ENCODE measurements at regions of chr15 and their contacts with region 1.

Region 1: DNA sequence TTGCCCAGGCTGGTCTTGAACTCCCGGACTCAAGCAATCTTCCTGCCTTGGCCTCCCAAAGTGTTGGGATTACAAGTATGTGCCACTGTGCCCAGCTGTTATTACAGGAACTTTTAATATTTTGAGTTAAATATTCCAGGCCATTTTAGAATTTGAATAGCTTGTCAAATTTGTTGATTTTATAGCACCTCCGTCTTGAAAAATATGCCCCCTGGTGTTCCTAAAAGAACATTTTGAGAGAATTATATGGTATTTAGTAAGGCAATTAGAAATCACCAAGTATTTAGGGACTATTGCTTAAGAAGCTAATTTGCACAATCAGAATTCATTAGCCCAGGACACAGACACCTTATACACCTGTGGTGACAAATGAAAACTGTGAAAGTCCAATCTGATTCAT is 23.7 kb downstream of the PDE8A start:
- DNase-seq: no peak
- ATAC-seq: no peak
- H3K4me3 ChIP-seq: no peak overlapping the region
- H3K27ac ChIP-seq: peak overlapping the region in 1 of 12 donors; percentile 47
- H3K4me1 ChIP-seq: peaks cover 18 to 92% (median 64%) of the 10 kb centered on the region in 12 donors
- H3K27me3 ChIP-seq: no peaks in the 10 kb centered on the region
- CTCF ChIP-seq: peak in 2 of 12 donors; percentile 17 to 25
- POLR2A ChIP-seq: no peak

Region 2: GRCh38 chr15:84955089-84955848 is 50.0 kb before region 1 on chr15:
- intact Hi-C with region 1: loop called in 2 of 10 experiments (anchors 10 kb)
- DNase-seq: peak; percentile 72 to 79 (median 78)
- ATAC-seq: peak; percentile 87 to 97 (median 94)
- H3K4me3 ChIP-seq: peak overlapping the region in 10 of 12 donors; percentile 25 to 46 (median 32)
- H3K27ac ChIP-seq: peak overlapping the region in 1 of 12 donors; percentile 35
- H3K4me1 ChIP-seq: peaks cover 0 to 24% (median 10%) of the 10 kb centered on the region in 12 donors
- H3K27me3 ChIP-seq: no peaks in the 10 kb centered on the region
- CTCF ChIP-seq: peak; percentile 76 to 94 (median 88)
- POLR2A ChIP-seq: no peak

Region 3: GRCh38 chr15:85059734-85060133 is 54.4 kb after region 1 on chr15:
- intact Hi-C with region 1: no loop called
- DNase-seq: no peak
- ATAC-seq: no peak
- H3K4me3 ChIP-seq: no peak overlapping the region
- H3K27ac ChIP-seq: no peak overlapping the region
- H3K4me1 ChIP-seq: peaks cover 0 to 22% (median 12%) of the 10 kb centered on the region in 12 donors
- H3K27me3 ChIP-seq: no peaks in the 10 kb centered on the region
- CTCF ChIP-seq: no peak
- POLR2A ChIP-seq: no peak